SK-N-SH (cell line): ENCODE measurements at regions of chr7 and their contacts with region 1.

Region 1: DNA sequence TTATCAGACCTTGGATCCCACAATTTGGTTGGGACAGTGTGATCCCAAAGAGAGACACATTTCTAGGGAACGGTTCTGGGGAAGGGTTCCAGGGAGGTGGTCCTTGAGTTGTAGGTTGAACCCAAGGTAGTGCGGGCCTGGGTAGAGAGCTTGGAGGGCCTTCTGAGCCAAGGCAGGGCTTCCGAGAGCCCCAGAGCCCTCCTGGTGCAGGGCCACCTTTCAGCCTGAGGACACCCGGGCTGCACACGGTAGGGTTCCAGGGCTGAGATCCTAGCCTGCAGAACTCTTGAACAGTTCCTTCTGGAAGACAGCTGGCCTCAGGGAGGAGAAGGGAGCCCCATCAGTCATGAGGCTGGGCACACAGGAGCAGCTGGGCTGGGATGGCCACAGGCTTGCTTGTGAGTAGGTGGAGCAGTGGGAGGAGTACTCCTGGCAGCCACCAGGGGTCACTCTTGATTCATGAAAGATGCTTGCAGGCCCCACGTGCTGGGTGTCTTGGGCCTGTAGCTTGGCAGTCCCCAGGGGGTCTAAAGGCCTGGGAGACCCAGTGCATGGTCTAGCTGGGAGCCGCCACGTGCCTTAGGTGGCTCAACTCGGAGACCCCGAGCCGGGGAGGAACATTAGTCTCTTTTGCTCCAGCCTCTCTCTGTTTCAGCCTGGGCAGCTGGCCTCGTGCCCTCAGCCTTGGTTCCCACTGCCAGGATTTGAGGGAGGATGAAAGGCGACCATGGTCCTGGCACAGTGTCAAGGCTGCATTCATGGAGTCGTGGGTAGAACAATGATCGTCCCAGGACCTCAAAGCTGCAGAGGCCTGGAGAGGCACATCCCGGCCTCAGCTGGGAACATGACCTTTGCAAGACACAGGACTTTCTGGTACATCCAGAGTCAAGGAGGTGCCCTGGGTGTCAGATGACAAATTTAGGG is 381.6 kb downstream of the TYW1 start:
- DNase-seq: peak; percentile 89
- H3K4me3 ChIP-seq: no peak overlapping the region; a peak in 1 of 4 replicates
- H3K27ac ChIP-seq: no peak overlapping the region
- H3K4me1 ChIP-seq: peaks cover 0 to 3% of the 10 kb centered on the region in 2 experiments; a peak in 1 of 4 replicates
- H3K27me3 ChIP-seq: no peaks in the 10 kb centered on the region
- CTCF ChIP-seq: peak; percentile 91
- EP300 ChIP-seq: no peak
- RAD21 ChIP-seq: peak; percentile 98

Region 2: GRCh38 chr7:67392643-67393438 is 14.6 kb after region 1 on chr7:
- CTCF ChIA-PET with region 1: interaction called, 41 read pairs
- POLR2A ChIA-PET with region 1: no interaction called
- DNase-seq: no peak
- H3K4me3 ChIP-seq: no peak overlapping the region
- H3K27ac ChIP-seq: no peak overlapping the region
- H3K4me1 ChIP-seq: no peaks in the 10 kb centered on the region; a peak in 1 of 4 replicates
- H3K27me3 ChIP-seq: no peaks in the 10 kb centered on the region
- CTCF ChIP-seq: no peak
- EP300 ChIP-seq: no peak
- RAD21 ChIP-seq: no peak

Region 3: GRCh38 chr7:67450171-67450570 is 72.0 kb after region 1 on chr7:
- CTCF ChIA-PET with region 1: interaction called, 11 read pairs
- POLR2A ChIA-PET with region 1: no interaction called
- DNase-seq: no peak
- H3K4me3 ChIP-seq: no peak overlapping the region
- H3K27ac ChIP-seq: no peak overlapping the region
- H3K4me1 ChIP-seq: peaks cover 0 to 9% of the 10 kb centered on the region in 2 experiments; a peak in 1 of 4 replicates
- H3K27me3 ChIP-seq: no peaks in the 10 kb centered on the region
- CTCF ChIP-seq: no peak
- EP300 ChIP-seq: no peak
- RAD21 ChIP-seq: no peak

Region 4: DNA sequence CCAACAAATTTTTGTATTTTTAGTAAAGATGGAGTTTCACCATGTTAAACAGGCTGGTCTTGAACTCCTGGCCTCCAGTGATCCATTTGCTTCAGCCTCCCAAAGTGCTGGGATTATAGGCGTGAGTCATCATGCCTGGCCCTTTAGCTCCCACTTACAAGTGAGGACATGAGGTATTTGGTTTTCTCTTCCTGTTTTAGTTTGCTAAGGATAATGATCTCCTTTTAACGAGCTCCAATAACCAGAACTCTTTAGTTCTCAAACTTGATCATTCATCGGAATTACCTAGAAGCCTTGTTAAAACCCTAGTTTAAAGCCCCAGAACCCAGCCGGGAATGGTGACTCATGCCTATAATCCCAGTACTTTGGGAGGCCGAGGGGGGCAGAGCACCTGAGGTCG is 99.9 kb after region 1 on chr7:
- CTCF ChIA-PET with region 1: interaction called, 36 read pairs
- POLR2A ChIA-PET with region 1: no interaction called
- DNase-seq: no peak
- H3K4me3 ChIP-seq: no peak overlapping the region
- H3K27ac ChIP-seq: no peak overlapping the region
- H3K4me1 ChIP-seq: no peaks in the 10 kb centered on the region
- H3K27me3 ChIP-seq: no peaks in the 10 kb centered on the region
- CTCF ChIP-seq: no peak
- EP300 ChIP-seq: no peak
- RAD21 ChIP-seq: no peak

Region 5: DNA sequence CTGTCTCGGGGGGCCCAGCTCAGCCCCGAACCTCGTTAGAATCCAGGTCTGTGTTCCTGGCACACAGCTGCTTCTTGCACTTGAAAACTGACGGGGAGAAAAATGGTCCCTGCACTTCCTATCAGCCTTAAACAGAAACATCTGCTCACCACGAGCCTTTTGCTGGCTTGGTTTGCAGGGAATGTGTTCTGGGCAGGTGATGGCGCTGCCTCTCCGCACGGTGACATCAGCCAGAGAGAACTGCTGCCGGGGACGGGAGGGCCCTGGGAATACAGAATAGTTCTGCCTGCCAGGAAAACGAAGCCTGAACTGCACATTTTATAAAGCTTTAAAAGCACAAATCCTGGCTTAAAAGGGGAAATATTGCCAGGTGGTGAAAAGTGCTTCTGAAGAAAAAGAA is 241.0 kb after region 1 on chr7:
- CTCF ChIA-PET with region 1: interaction called, 33 read pairs
- POLR2A ChIA-PET with region 1: no interaction called
- DNase-seq: peak; percentile 79
- H3K4me3 ChIP-seq: no peak overlapping the region
- H3K27ac ChIP-seq: peak overlapping the region in 1 of 2 experiments; percentile 89; a peak in 2 of 4 replicates
- H3K4me1 ChIP-seq: peaks cover 0 to 23% of the 10 kb centered on the region in 2 experiments; a peak in 2 of 4 replicates
- H3K27me3 ChIP-seq: no peaks in the 10 kb centered on the region; the same call in 1 of the 2 replicates
- CTCF ChIP-seq: no peak
- EP300 ChIP-seq: peak in 1 of 2 experiments; percentile 68; a peak in 1 of 4 replicates
- RAD21 ChIP-seq: peak; percentile 75

Region 6: GRCh38 chr7:67788669-67789068 is 410.5 kb after region 1 on chr7:
- CTCF ChIA-PET with region 1: interaction called, 10 read pairs
- POLR2A ChIA-PET with region 1: no interaction called
- DNase-seq: peak; percentile 77
- H3K4me3 ChIP-seq: peak overlapping the region in 1 of 2 experiments; percentile 45; a peak in 1 of 4 replicates
- H3K27ac ChIP-seq: no peak overlapping the region
- H3K4me1 ChIP-seq: peaks cover 0 to 9% of the 10 kb centered on the region in 2 experiments; a peak in 1 of 4 replicates
- H3K27me3 ChIP-seq: no peaks in the 10 kb centered on the region
- CTCF ChIP-seq: peak; percentile 37
- EP300 ChIP-seq: peak in 1 of 2 experiments; percentile 22; a peak in 1 of 4 replicates
- RAD21 ChIP-seq: peak; percentile 95